ENCODE measurements at regions of chr11 and their contacts with region 1.

Region 1: GRCh38 chr11:59849129-59849528 is 3.8 kb upstream of the CBLIF start:
- DNase-seq: no peak
- H3K4me3 ChIP-seq: no peak overlapping the region
- H3K27ac ChIP-seq: no peak overlapping the region
- H3K4me1 ChIP-seq: no peaks in the 10 kb centered on the region
- H3K27me3 ChIP-seq: peaks cover 2% of the 10 kb centered on the region
- CTCF ChIP-seq: no peak
- EP300 ChIP-seq: no peak
- POLR2A ChIP-seq: no peak

Region 2: GRCh38 chr11:60084631-60085273 is 235.6 kb after region 1 on chr11:
- intact Hi-C with region 1: no loop called
- DNase-seq: no peak
- H3K4me3 ChIP-seq: no peak overlapping the region
- H3K27ac ChIP-seq: no peak overlapping the region
- H3K4me1 ChIP-seq: no peaks in the 10 kb centered on the region
- H3K27me3 ChIP-seq: no peaks in the 10 kb centered on the region
- CTCF ChIP-seq: no peak
- EP300 ChIP-seq: no peak
- POLR2A ChIP-seq: no peak

Region 3: GRCh38 chr11:61028272-61028761 is 1179.2 kb after region 1 on chr11:
- intact Hi-C with region 1: loop called in 1 of 4 experiments (anchors 10 kb)
- DNase-seq: no peak
- H3K4me3 ChIP-seq: no peak overlapping the region
- H3K27ac ChIP-seq: no peak overlapping the region
- H3K4me1 ChIP-seq: no peaks in the 10 kb centered on the region
- H3K27me3 ChIP-seq: no peaks in the 10 kb centered on the region
- CTCF ChIP-seq: no peak
- EP300 ChIP-seq: no peak
- POLR2A ChIP-seq: no peak